ENCODE measurements at regions of chrX and their contacts with region 1.

Region 1: GRCh38 chrX:6225911-6226595 is 2.6 kb downstream of the NLGN4X start:
- DNase-seq: peak; percentile 17
- CTCF ChIP-seq: no peak

Region 2: GRCh38 chrX:6021316-6022091 is 204.5 kb before region 1 on chrX:
- in situ Hi-C with region 1: loop called (anchors 25 kb)
- DNase-seq: peak; percentile 17
- CTCF ChIP-seq: peak; percentile 84

Region 3: DNA sequence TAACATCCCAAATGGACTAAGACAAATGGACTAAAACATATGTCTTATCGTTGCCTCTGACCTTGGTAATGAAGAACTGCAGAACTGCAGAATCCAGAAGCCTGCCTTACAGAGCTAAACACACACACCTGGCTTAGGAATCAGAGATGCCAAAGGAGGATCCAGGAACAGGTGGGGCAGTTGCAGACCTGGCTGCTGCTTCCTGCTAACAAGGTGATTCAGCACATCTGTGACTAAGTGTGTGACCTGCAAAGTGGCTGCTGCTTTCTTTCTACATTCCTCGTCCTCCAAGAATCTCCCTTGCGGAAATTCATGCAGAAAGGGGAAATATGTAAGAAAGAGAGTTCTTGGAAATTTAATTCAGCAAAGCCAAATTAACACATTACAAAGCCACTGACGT is 99.4 kb after region 1 on chrX:
- in situ Hi-C with region 1: no loop called
- DNase-seq: no peak
- CTCF ChIP-seq: no peak

Region 4: GRCh38 chrX:6468696-6469095 is 242.6 kb after region 1 on chrX:
- in situ Hi-C with region 1: no loop called
- DNase-seq: no peak
- CTCF ChIP-seq: no peak